Psoas muscle (tissue), 8 donors: ENCODE measurements at regions of chr1 and their contacts with region 1.

Region 1: DNA sequence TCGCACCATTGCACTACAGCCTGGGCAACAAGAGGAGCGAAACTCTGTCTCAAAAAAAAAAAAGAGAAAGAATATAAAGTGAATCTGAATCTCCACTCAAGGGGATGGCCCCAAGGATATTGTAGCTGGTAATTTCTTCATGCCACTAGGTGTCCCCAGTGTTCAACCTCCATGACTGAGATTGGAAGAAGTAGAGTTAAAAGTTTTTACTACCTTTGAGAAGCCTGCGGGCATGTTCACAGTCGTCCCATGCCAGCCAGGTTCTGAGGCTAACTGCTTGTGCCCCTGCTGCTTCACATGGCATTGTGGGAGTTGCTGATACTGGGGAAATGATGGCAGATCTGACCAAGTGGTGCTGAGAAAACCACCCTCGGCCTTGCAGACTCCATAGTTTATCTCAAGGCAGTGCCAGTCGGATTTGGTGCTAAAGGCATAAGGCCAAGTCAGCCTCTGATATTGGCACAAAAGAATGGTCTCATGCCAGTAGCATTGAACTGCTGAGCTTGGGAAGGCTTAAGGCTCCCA is 10.8 kb upstream of the SHISA4 start:
- DNase-seq: no peak
- ATAC-seq: peak; percentile 58 to 76 (median 62)
- H3K4me3 ChIP-seq: no peak overlapping the region
- H3K27ac ChIP-seq: peak overlapping the region; percentile 75
- H3K4me1 ChIP-seq: peaks cover 47% of the 10 kb centered on the region
- H3K27me3 ChIP-seq: no peaks in the 10 kb centered on the region
- CTCF ChIP-seq: peak; percentile 73

Region 2: DNA sequence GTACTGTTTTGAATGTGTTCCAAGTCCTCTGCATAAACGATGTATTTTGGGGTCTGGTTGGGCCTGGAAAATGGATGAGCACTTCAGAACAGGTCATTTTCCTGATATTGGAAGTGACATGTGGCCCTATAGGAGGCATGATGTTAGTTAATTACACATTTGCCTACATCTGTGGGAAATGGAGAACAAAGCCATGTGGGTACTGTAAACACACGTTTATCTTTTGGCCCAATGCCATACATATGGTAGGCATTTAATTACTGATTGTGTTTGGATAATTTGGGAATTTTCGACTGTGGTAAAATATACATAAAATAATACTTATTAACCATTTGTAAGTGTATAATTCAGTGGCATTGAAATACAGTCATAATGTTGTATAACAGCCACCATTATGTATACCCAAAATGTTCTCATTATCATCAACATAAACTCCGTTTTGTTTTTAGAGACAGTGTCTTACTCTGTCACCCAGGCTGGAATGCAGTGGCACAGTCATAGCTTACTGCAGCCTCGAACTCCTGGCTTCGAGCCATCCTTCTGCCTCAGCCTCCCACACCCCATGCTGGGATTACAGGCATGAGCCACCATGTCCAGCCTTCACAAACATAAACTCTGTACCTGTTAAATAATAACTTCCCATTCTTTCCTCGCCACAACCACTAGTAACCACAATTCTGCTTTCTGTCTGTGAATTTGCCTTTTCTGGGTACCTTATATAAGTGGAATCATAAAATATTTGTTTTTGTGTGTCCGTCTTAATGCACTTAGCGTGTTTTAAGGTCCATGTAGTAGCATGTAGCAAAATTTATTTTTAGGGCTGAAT is 92.6 kb after region 1 on chr1:
- intact Hi-C with region 1: loop called (anchors 5 kb)
- DNase-seq: no peak
- ATAC-seq: peak in 2 of 4 donors; percentile 43 to 48
- H3K4me3 ChIP-seq: no peak overlapping the region
- H3K27ac ChIP-seq: peak overlapping the region; percentile 3
- H3K4me1 ChIP-seq: peaks cover 7% of the 10 kb centered on the region
- H3K27me3 ChIP-seq: no peaks in the 10 kb centered on the region
- CTCF ChIP-seq: no peak

Region 3: DNA sequence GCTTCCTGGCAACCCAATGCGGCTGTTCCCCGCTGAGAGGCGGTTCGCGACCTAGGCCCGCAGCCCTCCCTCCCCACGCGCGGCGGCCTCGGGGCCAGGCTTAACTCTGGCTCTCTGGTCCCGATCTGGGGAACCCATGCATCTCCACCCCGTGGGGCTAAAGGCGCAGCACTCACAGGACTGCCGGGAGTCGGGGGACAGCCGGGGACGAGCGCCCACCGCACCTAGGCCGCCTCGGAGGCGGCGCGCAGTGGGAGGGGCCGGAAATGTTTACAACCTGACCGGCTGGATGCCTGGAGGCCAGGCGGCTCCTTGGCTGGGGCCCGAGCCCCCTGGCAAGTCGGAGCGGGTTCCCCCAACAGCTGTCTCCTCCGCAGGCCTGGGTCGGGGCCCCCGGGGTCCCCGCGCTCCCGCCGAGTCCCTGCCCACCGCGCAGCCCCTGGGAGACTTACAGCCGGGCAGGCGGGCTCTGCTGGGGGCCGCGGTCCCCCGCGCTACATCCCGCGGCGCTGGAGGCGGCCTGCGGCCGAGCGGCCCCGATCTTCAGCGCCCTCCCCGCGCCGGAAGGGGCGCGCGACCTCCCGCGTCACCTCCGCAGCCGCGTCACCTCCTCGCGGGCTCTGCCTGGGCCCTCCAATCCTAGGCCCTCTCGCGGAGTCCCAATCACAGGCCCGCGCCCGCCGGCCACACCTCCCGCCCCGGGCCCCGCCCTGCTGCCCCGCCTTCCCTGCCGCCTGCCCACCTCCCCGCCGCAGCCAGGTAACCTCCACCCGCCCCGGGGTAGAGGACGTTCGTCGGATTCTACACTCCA is 1080.0 kb after region 1 on chr1 and contains the start of gene ADIPOR1:
- intact Hi-C with region 1: loop called in 1 of 2 experiments (anchors 5 kb)
- DNase-seq: peak; percentile 91 to 96
- ATAC-seq: peak; percentile 82 to 86 (median 83)
- H3K4me3 ChIP-seq: peak within 1 kb of the TSS; percentile 97
- H3K27ac ChIP-seq: peak within 1 kb of the TSS; percentile 99
- H3K4me1 ChIP-seq: peaks cover 83% of the 10 kb centered on the region
- H3K27me3 ChIP-seq: no peaks in the 10 kb centered on the region
- CTCF ChIP-seq: no peak
- total RNA-seq, gene ADIPOR1: 64.4 to 91.0 (median 72.1) TPM